H1 (cell line): ENCODE measurements at regions of chr3 and their contacts with region 1.

Region 1: GRCh38 chr3:115092220-115092791 is 54.8 kb downstream of the ZBTB20 start:
- DNase-seq: no peak
- H3K4me3 ChIP-seq: no peak overlapping the region
- H3K27ac ChIP-seq: no peak overlapping the region
- H3K4me1 ChIP-seq: 0 out of 7 replicates have a peak, but pooled peaks cover 0 to 2% (median 0%) of the 10 kb centered on the region in 4 experiments
- H3K27me3 ChIP-seq: no peaks in the 10 kb centered on the region
- CTCF ChIP-seq: peak; percentile 42 to 69 (median 66); a peak in 3 of 4 replicates
- EP300 ChIP-seq: no peak
- POLR2A ChIP-seq: no peak
- RAD21 ChIP-seq: peak; percentile 64 to 65

Region 2: DNA sequence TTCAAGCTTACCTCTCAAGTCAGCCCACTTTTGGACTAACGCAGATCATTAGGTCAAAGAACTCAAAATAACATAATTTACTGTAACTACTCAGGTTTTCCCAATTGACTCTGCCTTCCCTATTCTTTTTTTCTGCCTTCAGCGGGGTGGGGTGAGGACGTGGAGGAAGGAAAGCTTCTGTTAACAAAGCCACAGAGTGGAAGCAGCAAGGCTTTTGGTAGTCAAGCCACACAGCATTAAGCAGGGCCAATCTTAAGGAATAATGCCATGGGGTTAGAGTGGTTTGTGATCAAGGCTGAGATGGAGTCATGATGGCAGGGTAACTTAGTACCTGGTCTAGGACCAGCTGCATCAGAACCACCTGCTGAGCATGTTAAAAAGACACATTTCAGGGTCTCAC is 520.9 kb before region 1 on chr3:
- CTCF ChIA-PET with region 1: no interaction called
- POLR2A ChIA-PET with region 1: no interaction called
- DNase-seq: no peak
- H3K4me3 ChIP-seq: no peak overlapping the region
- H3K27ac ChIP-seq: no peak overlapping the region
- H3K4me1 ChIP-seq: peaks cover 0 to 11% (median 5%) of the 10 kb centered on the region in 4 experiments; a peak in 5 of 7 replicates
- H3K27me3 ChIP-seq: no peaks in the 10 kb centered on the region
- CTCF ChIP-seq: no peak
- EP300 ChIP-seq: no peak
- POLR2A ChIP-seq: no peak
- RAD21 ChIP-seq: no peak

Region 3: GRCh38 chr3:115004201-115005140 is 87.8 kb before region 1 on chr3:
- CTCF ChIA-PET with region 1: no interaction called
- POLR2A ChIA-PET with region 1: no interaction called
- DNase-seq: no peak
- H3K4me3 ChIP-seq: no peak overlapping the region
- H3K27ac ChIP-seq: no peak overlapping the region
- H3K4me1 ChIP-seq: no peaks in the 10 kb centered on the region
- H3K27me3 ChIP-seq: no peaks in the 10 kb centered on the region
- CTCF ChIP-seq: no peak
- EP300 ChIP-seq: no peak
- POLR2A ChIP-seq: no peak
- RAD21 ChIP-seq: no peak

Region 4: DNA sequence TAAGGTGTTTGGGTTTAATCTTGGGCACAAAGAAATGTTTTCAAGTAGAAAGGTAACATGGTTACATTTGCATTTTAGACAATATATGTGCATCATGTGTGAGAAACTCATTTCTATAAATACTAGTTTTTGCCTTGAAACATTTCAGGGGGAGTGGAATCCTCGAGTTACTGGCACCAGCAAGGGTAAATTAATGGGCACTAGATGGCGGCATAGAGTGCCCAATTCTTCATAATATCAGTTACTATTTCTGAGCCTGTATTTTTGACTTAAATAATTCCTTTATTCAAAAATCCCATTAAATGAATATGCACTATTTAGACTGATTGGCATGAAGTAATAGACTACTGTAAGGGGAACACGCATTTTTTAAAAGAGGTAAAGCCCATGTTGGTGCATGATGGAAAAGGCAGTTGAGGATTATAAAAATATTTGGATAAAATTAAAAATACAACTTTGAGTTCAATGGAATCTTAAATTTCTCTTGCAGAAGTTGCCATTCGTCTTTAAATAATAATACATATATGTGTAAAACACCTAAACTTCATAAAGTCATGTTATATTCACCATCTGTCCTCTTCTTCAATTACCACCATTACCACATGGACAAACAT is 51.5 kb before region 1 on chr3:
- CTCF ChIA-PET with region 1: interaction called, 11 read pairs
- POLR2A ChIA-PET with region 1: no interaction called
- DNase-seq: no peak
- H3K4me3 ChIP-seq: no peak overlapping the region
- H3K27ac ChIP-seq: no peak overlapping the region
- H3K4me1 ChIP-seq: no peaks in the 10 kb centered on the region
- H3K27me3 ChIP-seq: no peaks in the 10 kb centered on the region
- CTCF ChIP-seq: peak in 2 of 3 experiments; percentile 49 to 57; a peak in 2 of 4 replicates
- EP300 ChIP-seq: no peak
- POLR2A ChIP-seq: no peak
- RAD21 ChIP-seq: peak; percentile 52 to 58